SK-N-SH (cell line): ENCODE measurements at regions of chr9 and their contacts with region 1.

Region 1: DNA sequence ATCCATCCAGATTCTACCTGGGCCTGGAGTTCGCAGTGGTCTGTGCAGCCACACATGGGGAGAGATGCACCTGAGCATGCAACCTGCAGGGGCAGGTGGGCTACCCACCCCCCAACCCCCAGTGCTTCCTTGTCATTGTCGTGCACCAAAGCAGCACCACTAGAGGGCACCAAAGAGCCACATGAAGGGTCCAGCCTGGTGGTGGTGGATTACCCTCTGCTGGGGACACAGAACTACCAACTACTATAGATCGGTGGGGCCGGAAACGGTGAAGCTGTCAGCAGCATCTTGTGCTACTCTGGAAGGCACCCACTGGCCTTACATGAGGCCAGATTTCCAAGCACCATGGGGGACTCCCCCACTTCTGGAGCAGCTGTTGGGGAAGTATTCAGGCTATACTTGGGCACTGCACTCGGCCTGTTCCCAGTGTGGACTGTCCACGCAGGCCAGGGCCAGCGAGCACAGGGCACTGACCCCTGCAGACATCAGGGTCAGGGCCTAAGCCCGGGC is 60.2 kb upstream of the TBC1D2 start:
- DNase-seq: peak; percentile 89
- H3K4me3 ChIP-seq: peak overlapping the region in 1 of 2 experiments; percentile 36; a peak in 1 of 4 replicates
- H3K27ac ChIP-seq: no peak overlapping the region
- H3K4me1 ChIP-seq: peaks cover 5 to 7% of the 10 kb centered on the region in 2 experiments; a peak in 2 of 4 replicates
- H3K27me3 ChIP-seq: no peaks in the 10 kb centered on the region; the same call in 1 of the 2 replicates
- CTCF ChIP-seq: peak; percentile 97
- EP300 ChIP-seq: no peak
- RAD21 ChIP-seq: peak; percentile 94

Region 2: GRCh38 chr9:98287383-98287782 is 28.2 kb before region 1 on chr9:
- CTCF ChIA-PET with region 1: interaction called, 13 read pairs
- POLR2A ChIA-PET with region 1: no interaction called
- DNase-seq: peak; percentile 44
- H3K4me3 ChIP-seq: no peak overlapping the region
- H3K27ac ChIP-seq: no peak overlapping the region
- H3K4me1 ChIP-seq: peaks cover 0 to 5% of the 10 kb centered on the region in 2 experiments; a peak in 1 of 4 replicates
- H3K27me3 ChIP-seq: peaks cover 9% of the 10 kb centered on the region; the same call in 1 of the 2 replicates
- CTCF ChIP-seq: no peak
- EP300 ChIP-seq: no peak
- RAD21 ChIP-seq: no peak

Region 3: GRCh38 chr9:98333703-98334582 is 18.3 kb after region 1 on chr9:
- CTCF ChIA-PET with region 1: interaction called, 27 read pairs
- POLR2A ChIA-PET with region 1: no interaction called
- DNase-seq: no peak
- H3K4me3 ChIP-seq: no peak overlapping the region
- H3K27ac ChIP-seq: peak overlapping the region in 1 of 2 experiments; percentile 71; a peak in 2 of 4 replicates
- H3K4me1 ChIP-seq: peaks cover 0 to 20% of the 10 kb centered on the region in 2 experiments; a peak in 2 of 4 replicates
- H3K27me3 ChIP-seq: no peaks in the 10 kb centered on the region
- CTCF ChIP-seq: no peak
- EP300 ChIP-seq: no peak
- RAD21 ChIP-seq: no peak

Region 4: DNA sequence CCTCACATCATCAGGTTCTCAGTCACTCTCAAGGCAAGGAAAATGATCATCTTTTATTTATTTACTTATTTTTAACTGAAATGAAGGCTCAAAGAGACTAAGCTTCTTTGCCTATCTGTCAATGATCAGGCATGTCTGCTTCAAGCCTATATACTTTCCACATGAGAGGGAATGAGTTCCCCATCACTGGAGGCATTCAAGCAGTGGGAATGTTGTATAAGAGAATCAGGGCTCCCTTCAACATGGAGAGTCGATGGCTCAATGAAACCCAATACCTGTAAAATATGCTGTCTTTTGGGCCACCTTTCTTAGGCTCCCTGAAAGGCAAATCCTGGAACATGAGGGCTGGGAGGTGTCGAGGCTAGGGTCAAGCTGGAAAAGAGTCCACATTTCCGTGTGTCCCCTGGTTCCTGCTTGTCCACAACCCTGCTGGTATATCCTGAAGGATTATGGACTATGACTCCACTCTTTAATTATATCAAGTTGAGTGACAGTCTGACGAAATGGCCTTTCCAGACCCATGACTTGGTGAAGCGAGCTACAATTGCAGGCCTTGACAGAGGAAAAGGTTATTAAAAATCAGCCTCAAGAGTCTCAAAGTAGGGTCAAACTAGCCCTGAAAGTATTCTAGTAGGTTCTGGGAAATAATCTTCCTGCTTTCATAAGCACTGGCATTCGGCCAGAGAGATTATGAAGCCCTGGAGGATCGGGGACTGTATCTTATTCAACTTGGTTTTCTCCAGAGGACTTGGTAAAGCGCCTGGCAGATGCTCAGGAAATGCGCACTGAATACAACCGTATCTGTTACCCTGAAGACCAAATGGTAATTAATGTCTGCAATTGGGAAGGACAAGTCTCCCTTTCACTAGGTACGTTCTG is 85.8 kb after region 1 on chr9:
- CTCF ChIA-PET with region 1: no interaction called
- POLR2A ChIA-PET with region 1: no interaction called
- DNase-seq: no peak
- H3K4me3 ChIP-seq: no peak overlapping the region
- H3K27ac ChIP-seq: no peak overlapping the region
- H3K4me1 ChIP-seq: peaks cover 0 to 3% of the 10 kb centered on the region in 2 experiments; a peak in 1 of 4 replicates
- H3K27me3 ChIP-seq: peaks cover 29% of the 10 kb centered on the region; the same call in 1 of the 2 replicates
- CTCF ChIP-seq: no peak
- EP300 ChIP-seq: no peak
- RAD21 ChIP-seq: no peak

Region 5: DNA sequence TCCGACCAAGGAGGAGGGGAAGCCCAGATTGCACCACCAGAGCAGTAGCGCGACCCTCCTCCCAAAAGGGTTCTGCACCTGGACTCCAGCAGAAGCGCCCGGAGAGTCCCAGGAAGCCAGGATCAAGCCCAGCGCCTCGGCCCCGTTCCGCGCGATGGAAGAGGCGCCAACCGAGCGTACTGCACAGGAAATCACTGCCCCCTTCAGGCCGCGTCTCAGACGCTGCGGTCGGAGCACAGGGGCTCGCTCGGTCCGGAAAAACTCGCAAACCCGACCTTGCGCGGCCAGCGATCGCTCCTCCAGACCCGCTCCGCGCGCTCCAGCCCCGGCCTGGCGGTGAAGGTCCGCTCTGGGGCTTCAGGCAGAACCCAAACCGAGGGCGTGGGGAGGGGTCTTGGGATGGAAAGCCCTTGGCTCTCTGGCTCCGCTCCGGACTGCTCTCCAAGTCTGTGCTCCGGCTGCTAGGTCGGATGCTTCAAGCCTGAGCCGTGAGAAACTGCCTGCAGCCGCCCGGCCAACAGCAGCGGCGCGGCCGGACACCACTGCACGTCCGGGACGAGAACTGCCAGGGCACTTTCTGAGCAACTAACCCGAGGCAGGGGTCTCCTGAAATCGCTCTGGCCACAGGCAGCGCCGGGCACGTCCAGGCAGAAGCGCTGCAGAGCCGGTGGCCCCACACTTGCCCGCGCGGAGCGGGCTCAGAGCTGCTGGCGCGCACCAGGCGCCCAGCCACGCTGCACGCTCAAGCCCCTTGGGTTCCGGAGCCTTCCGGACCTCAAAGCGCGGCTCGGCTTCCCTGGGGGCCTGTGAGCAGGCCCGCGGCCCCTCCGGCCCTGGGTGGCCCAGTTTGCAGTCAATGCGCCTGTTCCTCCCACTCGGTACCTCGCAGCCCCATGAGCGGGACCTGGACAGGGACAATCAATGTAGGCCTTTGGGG is 391.8 kb after region 1 on chr9:
- CTCF ChIA-PET with region 1: interaction called, 16 read pairs
- POLR2A ChIA-PET with region 1: no interaction called
- DNase-seq: peak; percentile 84
- H3K4me3 ChIP-seq: peak overlapping the region in 1 of 2 experiments; percentile 54; a peak in 2 of 4 replicates
- H3K27ac ChIP-seq: no peak overlapping the region
- H3K4me1 ChIP-seq: no peaks in the 10 kb centered on the region; a peak in 1 of 4 replicates
- H3K27me3 ChIP-seq: peaks cover 54% of the 10 kb centered on the region
- CTCF ChIP-seq: peak; percentile 56
- EP300 ChIP-seq: no peak
- RAD21 ChIP-seq: peak; percentile 63

Region 6: DNA sequence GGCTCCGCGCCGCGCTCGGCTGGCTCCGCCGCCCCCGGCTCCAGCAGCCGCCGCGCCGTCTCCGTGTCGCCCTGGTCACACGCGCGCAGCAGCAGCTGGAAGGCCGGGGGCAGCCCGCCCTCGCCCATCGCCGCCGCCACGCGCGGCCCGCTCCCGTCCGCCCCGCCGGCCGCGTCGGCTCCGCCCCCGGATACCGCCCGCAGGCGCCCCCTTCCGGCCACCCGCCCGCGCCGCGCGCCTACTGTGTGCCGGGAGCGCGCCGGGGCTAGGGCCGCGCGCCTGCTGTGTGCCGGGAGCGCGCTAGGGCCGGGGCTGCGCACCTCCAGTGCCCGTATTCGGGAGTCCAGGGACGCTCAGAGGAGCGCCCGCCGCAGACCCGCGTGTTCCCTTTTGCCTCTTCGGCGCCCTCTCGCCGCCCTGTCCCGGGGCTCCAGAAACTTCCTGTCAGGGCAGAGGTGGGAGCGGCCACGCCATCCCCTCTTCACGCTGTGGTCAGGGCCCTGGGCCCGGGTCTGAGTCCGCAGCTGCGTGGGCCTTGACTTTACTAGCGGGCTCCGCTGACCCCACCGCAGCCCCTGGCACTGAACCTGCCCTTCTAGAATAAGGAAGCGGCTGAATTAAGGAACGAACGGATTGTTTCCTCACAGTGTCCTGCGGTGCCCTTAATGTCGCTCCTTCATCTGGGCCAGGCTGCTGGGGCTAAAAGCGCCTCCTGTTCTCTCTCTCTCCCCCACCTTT is 480.9 kb after region 1 on chr9 and contains the start of gene ANKS6:
- CTCF ChIA-PET with region 1: interaction called, 17 read pairs
- POLR2A ChIA-PET with region 1: no interaction called
- DNase-seq: peak; percentile 98
- H3K4me3 ChIP-seq: peak within 1 kb of the TSS; percentile 69
- H3K27ac ChIP-seq: no peak within 1 kb of the TSS; a peak in 1 of 4 replicates
- H3K4me1 ChIP-seq: peaks cover under 1 to 8% of the 10 kb centered on the region in 2 experiments; a peak in 1 of 4 replicates
- H3K27me3 ChIP-seq: no peaks in the 10 kb centered on the region
- CTCF ChIP-seq: peak; percentile 45
- EP300 ChIP-seq: no peak
- RAD21 ChIP-seq: no peak
- polyA plus RNA-seq, gene ANKS6: 26.1 and 29.3 TPM in 2 replicates